Naive thymus-derived CD4-positive, alpha-beta T cell (primary cell): ENCODE measurements at regions of chr10 and their contacts with region 1.

Region 1: GRCh38 chr10:133309111-133309719 is 501 bp downstream of the ZNF511 start:
- DNase-seq: peak; percentile 92 to 99 (median 95)
- ATAC-seq: peak; percentile 90
- H3K4me3 ChIP-seq: peak overlapping the region; percentile 66
- H3K4me3 Mint-ChIP-seq: peak overlapping the region; percentile 53 to 97 (median 77)
- H3K27ac ChIP-seq: peak overlapping the region; percentile 100
- H3K27ac Mint-ChIP-seq: peak overlapping the region in 8 of 9 donors; percentile 72 to 98 (median 88)
- H3K4me1 ChIP-seq: peaks cover 8 to 10% of the 10 kb centered on the region in 2 donors
- H3K4me1 Mint-ChIP-seq: peaks cover 12 to 39% (median 30%) of the 10 kb centered on the region in 7 donors
- H3K27me3 ChIP-seq: no peaks in the 10 kb centered on the region
- H3K27me3 Mint-ChIP-seq: peaks cover 0 to 5% (median 0%) of the 10 kb centered on the region in 5 donors

Region 2: DNA sequence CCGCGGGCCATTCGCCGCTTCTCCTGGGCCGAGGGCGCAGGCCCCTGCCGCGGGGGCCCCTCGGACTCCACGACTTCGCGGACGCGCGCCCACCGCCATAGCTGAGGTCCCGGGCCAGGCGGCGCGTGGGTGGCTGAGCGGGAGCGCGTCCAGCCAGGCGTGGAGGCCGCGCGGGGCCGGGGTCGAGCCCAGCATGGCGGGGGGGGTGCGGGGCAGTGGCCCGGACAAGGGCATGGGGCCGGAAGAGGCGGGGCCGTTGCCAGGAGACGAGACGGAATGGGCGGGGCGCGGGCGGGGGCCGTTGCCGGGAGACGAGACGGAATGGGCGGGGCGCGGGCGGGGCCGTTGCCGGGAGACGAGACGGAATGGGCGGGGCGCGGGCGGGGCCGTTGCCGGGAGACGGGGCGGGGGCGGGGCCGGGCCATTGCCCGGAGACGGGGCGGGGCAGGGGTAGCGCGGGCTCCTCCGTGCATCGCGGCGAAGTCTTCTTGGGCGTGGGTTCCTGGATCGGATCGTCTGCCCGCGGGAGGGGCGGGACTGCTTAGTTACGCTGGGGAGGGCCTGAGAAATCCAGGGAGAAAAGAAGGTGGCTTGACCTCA is 47.4 kb before region 1 on chr10:
- CTCF ChIA-PET with region 1: interaction called, 7 read pairs
- POLR2A ChIA-PET with region 1: interaction called, 3 read pairs
- intact Hi-C with region 1: loop called (anchors 1 kb)
- DNase-seq: peak; percentile 60 to 84 (median 72)
- ATAC-seq: peak; percentile 65
- H3K4me3 ChIP-seq: peak overlapping the region; percentile 52
- H3K4me3 Mint-ChIP-seq: peak overlapping the region; percentile 55 to 83 (median 80)
- H3K27ac ChIP-seq: peak overlapping the region; percentile 87
- H3K27ac Mint-ChIP-seq: peak overlapping the region; percentile 47 to 93 (median 80)
- H3K4me1 ChIP-seq: peaks cover 53 to 68% of the 10 kb centered on the region in 2 donors
- H3K4me1 Mint-ChIP-seq: peaks cover 51 to 81% (median 67%) of the 10 kb centered on the region in 7 donors
- H3K27me3 ChIP-seq: no peaks in the 10 kb centered on the region
- H3K27me3 Mint-ChIP-seq: peaks cover 0 to 2% (median 0%) of the 10 kb centered on the region in 5 donors

Region 3: GRCh38 chr10:133324198-133324792 is 15.1 kb after region 1 on chr10:
- CTCF ChIA-PET with region 1: interaction called, 6 read pairs
- POLR2A ChIA-PET with region 1: no interaction called
- intact Hi-C with region 1: loop called in 1 of 2 experiments (anchors 2 kb)
- DNase-seq: peak in 8 of 9 donors; percentile 43 to 77 (median 60)
- ATAC-seq: peak; percentile 85
- H3K4me3 ChIP-seq: no peak overlapping the region
- H3K4me3 Mint-ChIP-seq: peak overlapping the region in 4 of 10 donors; percentile 12 to 92 (median 88)
- H3K27ac ChIP-seq: no peak overlapping the region
- H3K27ac Mint-ChIP-seq: no peak overlapping the region
- H3K4me1 ChIP-seq: peaks cover 5 to 11% of the 10 kb centered on the region in 2 donors
- H3K4me1 Mint-ChIP-seq: peaks cover 4 to 16% (median 10%) of the 10 kb centered on the region in 7 donors
- H3K27me3 ChIP-seq: peaks cover 8 to 12% of the 10 kb centered on the region in 2 donors
- H3K27me3 Mint-ChIP-seq: peaks cover 10 to 44% (median 15%) of the 10 kb centered on the region in 5 donors

Region 4: GRCh38 chr10:133357285-133358151 is 48.3 kb after region 1 on chr10 and contains the start of gene FUOM:
- CTCF ChIA-PET with region 1: no interaction called
- POLR2A ChIA-PET with region 1: no interaction called
- intact Hi-C with region 1: loop called (anchors 1 kb)
- DNase-seq: peak; percentile 60 to 88 (median 74)
- ATAC-seq: peak; percentile 95
- H3K4me3 ChIP-seq: peak within 1 kb of the TSS; percentile 61
- H3K4me3 Mint-ChIP-seq: peak within 1 kb of the TSS; percentile 62 to 85 (median 79)
- H3K27ac ChIP-seq: peak within 1 kb of the TSS; percentile 76
- H3K27ac Mint-ChIP-seq: peak within 1 kb of the TSS in 7 of 9 donors; percentile 23 to 72 (median 59)
- H3K4me1 ChIP-seq: no peaks in the 10 kb centered on the region
- H3K4me1 Mint-ChIP-seq: peaks cover 0 to 6% (median 4%) of the 10 kb centered on the region in 7 donors
- H3K27me3 ChIP-seq: no peaks in the 10 kb centered on the region
- H3K27me3 Mint-ChIP-seq: no peaks in the 10 kb centered on the region
- total RNA-seq, gene FUOM: 11.2 to 24.6 (median 16.9) TPM

Region 5: GRCh38 chr10:133378251-133379096 is 69.3 kb after region 1 on chr10:
- CTCF ChIA-PET with region 1: no interaction called
- POLR2A ChIA-PET with region 1: no interaction called
- intact Hi-C with region 1: loop called (anchors 1 kb)
- DNase-seq: peak in 8 of 9 donors; percentile 51 to 78 (median 59)
- ATAC-seq: peak; percentile 73
- H3K4me3 ChIP-seq: peak overlapping the region; percentile 92
- H3K4me3 Mint-ChIP-seq: peak overlapping the region; percentile 82 to 90 (median 86)
- H3K27ac ChIP-seq: peak overlapping the region; percentile 69
- H3K27ac Mint-ChIP-seq: peak overlapping the region in 5 of 9 donors; percentile 33 to 84 (median 75)
- H3K4me1 ChIP-seq: peaks cover 0 to 3% of the 10 kb centered on the region in 2 donors
- H3K4me1 Mint-ChIP-seq: peaks cover 0 to 18% (median 10%) of the 10 kb centered on the region in 7 donors
- H3K27me3 ChIP-seq: no peaks in the 10 kb centered on the region
- H3K27me3 Mint-ChIP-seq: peaks cover 0 to 14% (median 0%) of the 10 kb centered on the region in 5 donors

Region 6: DNA sequence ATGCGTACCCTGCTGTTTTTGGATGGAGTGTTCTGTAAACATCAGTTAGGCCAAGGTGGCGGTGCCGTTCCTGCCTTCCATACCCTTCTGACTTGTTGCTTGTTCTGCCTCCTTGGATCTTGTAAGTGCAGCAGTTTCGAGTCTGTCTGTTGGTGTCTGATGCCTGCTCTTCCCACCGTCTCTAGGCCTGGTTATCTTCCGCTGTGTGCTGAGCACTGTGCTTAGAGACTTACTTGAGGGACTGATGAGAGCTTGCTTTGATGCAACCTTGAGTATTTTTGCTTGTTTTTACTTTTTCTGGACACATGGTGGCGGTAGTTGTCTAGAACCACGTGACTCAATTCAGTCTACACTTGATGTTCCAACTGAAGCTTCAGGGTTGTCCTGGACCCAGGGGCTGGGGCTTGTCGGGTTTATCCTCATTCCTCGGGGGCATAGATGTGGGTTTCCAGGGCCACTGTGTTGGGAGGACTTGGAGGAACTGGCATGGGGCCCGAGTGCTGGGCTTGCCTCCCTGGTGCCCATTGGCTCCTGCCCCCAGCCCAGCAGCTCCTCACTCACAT is 129.6 kb after region 1 on chr10:
- CTCF ChIA-PET with region 1: no interaction called
- POLR2A ChIA-PET with region 1: no interaction called
- intact Hi-C with region 1: no loop called
- DNase-seq: peak in 1 of 9 donors; percentile 21
- ATAC-seq: peak; percentile 45
- H3K4me3 ChIP-seq: no peak overlapping the region
- H3K4me3 Mint-ChIP-seq: no peak overlapping the region
- H3K27ac ChIP-seq: no peak overlapping the region
- H3K27ac Mint-ChIP-seq: no peak overlapping the region
- H3K4me1 ChIP-seq: peaks cover 0 to 9% of the 10 kb centered on the region in 2 donors
- H3K4me1 Mint-ChIP-seq: peaks cover 0 to 26% (median 12%) of the 10 kb centered on the region in 7 donors
- H3K27me3 ChIP-seq: no peaks in the 10 kb centered on the region
- H3K27me3 Mint-ChIP-seq: peaks cover 4 to 21% (median 16%) of the 10 kb centered on the region in 5 donors

Region 7: DNA sequence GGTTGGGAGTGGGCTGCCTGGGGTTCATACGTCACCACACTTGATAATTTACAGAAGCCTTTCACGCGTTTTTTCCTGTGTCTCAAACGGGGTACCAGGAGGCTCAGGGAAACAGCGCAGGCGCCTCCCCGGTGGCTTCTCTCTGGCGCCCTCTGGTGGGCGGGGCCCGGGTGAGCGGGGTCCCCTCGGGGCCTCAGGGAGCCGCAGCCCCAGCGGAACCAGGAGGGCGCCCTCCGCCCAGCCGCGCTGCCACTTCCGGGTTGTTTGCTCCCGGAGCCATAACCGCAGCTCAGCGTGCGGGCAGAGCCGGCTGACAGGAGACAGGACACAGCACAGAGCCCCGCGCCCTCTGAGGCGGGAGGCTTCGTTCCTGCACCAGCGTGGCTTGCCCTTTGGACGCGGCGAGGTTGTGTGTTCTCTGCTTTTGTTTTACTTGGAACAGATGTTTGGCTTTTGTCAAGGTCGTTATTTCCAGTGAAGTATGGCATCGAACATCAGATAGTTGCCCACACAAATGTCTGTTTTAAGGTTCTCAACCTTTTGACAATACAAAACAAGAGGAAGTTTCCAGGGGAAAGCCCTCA is 211.0 kb after region 1 on chr10:
- CTCF ChIA-PET with region 1: interaction called, 5 read pairs
- POLR2A ChIA-PET with region 1: no interaction called
- intact Hi-C with region 1: loop called in 1 of 2 experiments (anchors 1 kb)
- DNase-seq: peak; percentile 79 to 94 (median 87)
- ATAC-seq: peak; percentile 100
- H3K4me3 ChIP-seq: peak overlapping the region; percentile 61
- H3K4me3 Mint-ChIP-seq: peak overlapping the region; percentile 39 to 76 (median 64)
- H3K27ac ChIP-seq: peak overlapping the region; percentile 52
- H3K27ac Mint-ChIP-seq: peak overlapping the region in 5 of 9 donors; percentile 26 to 81 (median 48)
- H3K4me1 ChIP-seq: peaks cover 8 to 12% of the 10 kb centered on the region in 2 donors
- H3K4me1 Mint-ChIP-seq: peaks cover 0 to 21% (median 11%) of the 10 kb centered on the region in 7 donors
- H3K27me3 ChIP-seq: no peaks in the 10 kb centered on the region
- H3K27me3 Mint-ChIP-seq: peaks cover 0 to 43% (median 15%) of the 10 kb centered on the region in 5 donors